ENCODE measurements at regions of chr12 and their contacts with region 1.

Region 1: GRCh38 chr12:93127582-93128331 is 198.7 kb upstream of the EEA1 start:
- DNase-seq: peak; percentile 77 to 92 (median 82)
- ATAC-seq: peak; percentile 91 to 96 (median 92)
- H3K4me3 ChIP-seq: peak overlapping the region in 2 of 12 donors; percentile 6 to 15
- H3K27ac ChIP-seq: peak overlapping the region; percentile 61 to 92 (median 81)
- H3K4me1 ChIP-seq: peaks cover 0 to 27% (median 14%) of the 10 kb centered on the region in 12 donors
- H3K27me3 ChIP-seq: no peaks in the 10 kb centered on the region
- CTCF ChIP-seq: peak in 10 of 12 donors; percentile 21 to 48 (median 34)
- POLR2A ChIP-seq: no peak

Region 2: DNA sequence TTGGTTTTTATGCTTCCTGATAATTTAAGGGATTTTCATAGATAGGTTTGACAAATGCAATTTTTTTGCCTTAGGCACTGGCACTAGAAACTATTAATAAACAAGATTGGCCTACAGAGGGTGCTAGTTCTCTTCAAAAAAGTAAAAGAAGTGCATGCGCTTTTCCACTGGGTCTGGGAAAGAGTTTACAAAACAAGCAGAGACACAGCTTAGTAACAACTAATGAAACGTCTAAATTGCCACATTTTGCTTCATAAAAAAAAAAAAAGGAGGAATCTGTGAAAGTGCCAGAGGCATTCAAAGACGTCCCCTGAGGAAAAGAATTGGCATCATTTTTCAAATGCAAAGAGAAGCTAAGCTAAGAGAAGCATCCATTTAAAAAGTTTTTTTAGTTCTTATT is 140.4 kb before region 1 on chr12:
- intact Hi-C with region 1: loop called in 6 of 10 experiments (anchors 1 to 10 kb)
- DNase-seq: peak in 1 of 5 donors; percentile 21
- ATAC-seq: peak; percentile 59 to 86 (median 76)
- H3K4me3 ChIP-seq: peak overlapping the region in 1 of 12 donors; percentile 4
- H3K27ac ChIP-seq: peak overlapping the region in 11 of 12 donors; percentile 10 to 79 (median 59)
- H3K4me1 ChIP-seq: peaks cover 0 to 20% (median 6%) of the 10 kb centered on the region in 12 donors
- H3K27me3 ChIP-seq: no peaks in the 10 kb centered on the region
- CTCF ChIP-seq: peak; percentile 40 to 78 (median 64)
- POLR2A ChIP-seq: no peak

Region 3: GRCh38 chr12:92995258-92995903 is 132.4 kb before region 1 on chr12:
- intact Hi-C with region 1: loop called in 2 of 10 experiments (anchors 5 to 10 kb)
- DNase-seq: no peak
- ATAC-seq: no peak
- H3K4me3 ChIP-seq: no peak overlapping the region
- H3K27ac ChIP-seq: no peak overlapping the region
- H3K4me1 ChIP-seq: no peaks in the 10 kb centered on the region
- H3K27me3 ChIP-seq: no peaks in the 10 kb centered on the region
- CTCF ChIP-seq: no peak
- POLR2A ChIP-seq: no peak

Region 4: DNA sequence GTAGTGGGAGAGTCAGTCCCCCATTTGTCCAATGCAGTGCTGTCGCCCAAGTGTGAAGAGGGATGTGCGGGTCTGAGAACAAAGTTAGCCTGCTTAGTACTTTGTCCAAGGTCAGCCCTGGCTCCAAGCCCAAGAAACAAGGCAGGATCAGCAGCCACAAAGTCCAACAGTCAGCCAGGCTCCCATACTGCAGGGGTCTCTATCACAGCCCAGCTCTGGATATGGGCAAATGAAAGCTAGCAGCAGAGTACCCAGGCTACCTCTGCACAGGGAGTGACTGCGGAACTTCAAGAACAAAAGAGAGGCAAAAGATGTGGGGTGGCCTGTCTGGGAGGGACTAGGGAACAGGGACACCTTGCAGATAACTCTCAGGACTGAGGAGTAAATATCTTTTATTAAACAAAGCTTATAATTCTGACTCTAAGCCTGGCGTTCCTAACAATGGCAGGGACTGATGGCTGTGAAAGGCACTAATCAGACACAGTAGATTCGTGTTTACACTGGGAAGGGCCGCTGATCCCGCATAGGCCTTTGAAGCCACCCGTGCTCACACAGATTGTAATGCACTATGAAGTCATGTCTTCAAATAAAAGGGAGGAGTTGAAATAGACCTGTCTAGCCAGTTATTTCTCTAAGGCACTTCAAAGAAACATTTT is 107.7 kb before region 1 on chr12:
- intact Hi-C with region 1: loop called in 6 of 10 experiments (anchors 5 kb)
- DNase-seq: no peak
- ATAC-seq: peak in 2 of 4 donors; percentile 19 to 35
- H3K4me3 ChIP-seq: no peak overlapping the region
- H3K27ac ChIP-seq: no peak overlapping the region
- H3K4me1 ChIP-seq: peaks cover 0 to 12% (median 0%) of the 10 kb centered on the region in 12 donors
- H3K27me3 ChIP-seq: no peaks in the 10 kb centered on the region
- CTCF ChIP-seq: no peak
- POLR2A ChIP-seq: no peak

Region 5: GRCh38 chr12:93060666-93061471 is 66.9 kb before region 1 on chr12:
- intact Hi-C with region 1: loop called in 2 of 10 experiments (anchors 1 kb)
- DNase-seq: peak in 4 of 5 donors; percentile 39 to 56 (median 48)
- ATAC-seq: peak; percentile 38 to 75 (median 60)
- H3K4me3 ChIP-seq: peak overlapping the region in 6 of 12 donors; percentile 2 to 35 (median 24)
- H3K27ac ChIP-seq: peak overlapping the region; percentile 62 to 94 (median 82)
- H3K4me1 ChIP-seq: peaks cover 0 to 40% (median 23%) of the 10 kb centered on the region in 12 donors
- H3K27me3 ChIP-seq: no peaks in the 10 kb centered on the region
- CTCF ChIP-seq: peak in 3 of 12 donors; percentile 30 to 32 (median 31)
- POLR2A ChIP-seq: no peak

Region 6: DNA sequence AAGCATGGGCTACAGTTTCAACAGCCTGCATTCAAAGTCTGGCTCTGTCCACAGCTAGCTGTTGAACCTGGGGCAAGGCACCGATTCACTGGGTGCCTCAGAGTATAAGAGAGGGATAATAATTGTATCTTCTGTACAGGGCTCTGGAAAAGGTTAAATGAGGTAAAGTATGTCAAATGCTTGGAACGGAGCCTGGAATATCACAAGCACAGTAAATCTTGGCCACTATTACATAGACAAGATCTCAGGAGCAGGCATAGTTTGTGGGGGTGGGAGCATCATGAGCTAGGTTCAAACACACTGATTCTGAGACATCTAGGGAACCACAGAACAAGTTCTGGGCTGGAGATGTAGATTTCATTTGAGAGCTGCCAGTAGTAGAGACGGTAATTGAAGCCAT is 46.3 kb after region 1 on chr12:
- intact Hi-C with region 1: loop called in 7 of 10 experiments (anchors 1 to 5 kb)
- DNase-seq: peak in 3 of 5 donors; percentile 30 to 49 (median 37)
- ATAC-seq: peak; percentile 73 to 85 (median 80)
- H3K4me3 ChIP-seq: no peak overlapping the region
- H3K27ac ChIP-seq: peak overlapping the region; percentile 31 to 89 (median 78)
- H3K4me1 ChIP-seq: peaks cover 0 to 60% (median 38%) of the 10 kb centered on the region in 12 donors
- H3K27me3 ChIP-seq: no peaks in the 10 kb centered on the region
- CTCF ChIP-seq: no peak
- POLR2A ChIP-seq: no peak

Region 7: DNA sequence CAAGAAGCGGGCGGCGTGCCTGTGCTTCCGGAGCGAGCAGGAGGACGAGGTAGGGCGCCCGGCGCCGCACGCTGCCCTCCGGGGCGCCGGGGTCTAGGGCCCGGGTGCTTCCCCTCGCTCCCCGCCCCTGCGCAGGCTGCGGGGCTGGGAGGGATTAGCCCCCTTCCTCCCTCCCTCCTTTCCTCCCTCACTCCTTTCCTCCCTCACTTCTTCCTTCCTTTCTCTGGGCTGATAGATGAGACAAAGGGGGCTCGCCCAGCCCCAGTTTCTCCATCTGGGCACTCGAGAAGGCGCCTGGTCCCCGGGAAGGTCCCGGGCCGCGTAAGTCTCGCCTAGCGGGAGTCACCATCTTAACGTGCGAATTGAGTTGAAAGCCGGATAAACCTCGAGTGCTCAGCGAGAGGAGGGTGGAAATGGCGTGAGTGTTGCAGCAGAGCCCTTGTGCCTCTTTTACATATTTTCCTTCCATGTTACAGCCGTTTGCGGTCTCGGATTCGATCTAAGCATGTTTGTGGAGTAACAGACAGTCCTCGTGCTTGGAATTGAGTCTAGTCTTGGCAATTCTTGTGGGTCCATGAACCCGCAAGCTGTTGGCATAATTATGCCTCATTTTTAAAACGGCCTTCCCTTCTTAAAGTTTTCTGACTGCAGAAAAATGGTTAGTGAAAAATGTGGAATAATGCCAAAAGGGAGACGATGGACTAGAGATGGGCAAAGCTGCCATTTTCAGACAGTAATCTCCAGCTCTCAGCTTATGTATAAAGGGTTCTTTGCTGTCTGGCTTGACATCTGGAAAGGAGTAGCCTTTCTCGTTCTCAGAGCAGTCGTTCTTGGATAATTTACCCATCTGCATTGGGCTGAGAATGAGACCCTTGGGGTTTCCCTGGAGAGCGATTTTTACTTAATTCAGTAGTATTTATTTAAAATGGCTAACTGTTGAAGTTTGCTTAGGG is 250.9 kb after region 1 on chr12:
- intact Hi-C with region 1: loop called in 4 of 10 experiments (anchors 1 to 2 kb)
- DNase-seq: peak in 4 of 5 donors; percentile 38 to 50 (median 46)
- ATAC-seq: peak in 1 of 4 donors; percentile 14
- H3K4me3 ChIP-seq: peak overlapping the region; percentile 57 to 97 (median 86)
- H3K27ac ChIP-seq: peak overlapping the region; percentile 78 to 97 (median 96)
- H3K4me1 ChIP-seq: peaks cover 0 to 68% (median 30%) of the 10 kb centered on the region in 12 donors
- H3K27me3 ChIP-seq: no peaks in the 10 kb centered on the region
- CTCF ChIP-seq: no peak
- POLR2A ChIP-seq: peak in 1 of 2 donors; percentile 17

Measured in heart left ventricle (tissue), 16 donors.